CD4-positive, alpha-beta T cell (primary cell): ENCODE measurements at regions of chr20 and their contacts with region 1.

Region 1: GRCh38 chr20:63537525-63538203 is 488 bp upstream of the PTK6 start:
- DNase-seq: peak; percentile 83 to 97 (median 88)
- ATAC-seq: peak; percentile 86
- H3K4me3 ChIP-seq: peak overlapping the region; percentile 59
- H3K4me3 Mint-ChIP-seq: peak overlapping the region; percentile 80
- H3K27ac ChIP-seq: peak overlapping the region; percentile 59 to 73
- H3K27ac Mint-ChIP-seq: peak overlapping the region; percentile 78
- H3K4me1 ChIP-seq: peaks cover 37% of the 10 kb centered on the region
- H3K4me1 Mint-ChIP-seq: peaks cover 16% of the 10 kb centered on the region
- H3K27me3 ChIP-seq: no peaks in the 10 kb centered on the region
- H3K27me3 Mint-ChIP-seq: no peaks in the 10 kb centered on the region
- CTCF ChIP-seq: peak; percentile 97

Region 2: DNA sequence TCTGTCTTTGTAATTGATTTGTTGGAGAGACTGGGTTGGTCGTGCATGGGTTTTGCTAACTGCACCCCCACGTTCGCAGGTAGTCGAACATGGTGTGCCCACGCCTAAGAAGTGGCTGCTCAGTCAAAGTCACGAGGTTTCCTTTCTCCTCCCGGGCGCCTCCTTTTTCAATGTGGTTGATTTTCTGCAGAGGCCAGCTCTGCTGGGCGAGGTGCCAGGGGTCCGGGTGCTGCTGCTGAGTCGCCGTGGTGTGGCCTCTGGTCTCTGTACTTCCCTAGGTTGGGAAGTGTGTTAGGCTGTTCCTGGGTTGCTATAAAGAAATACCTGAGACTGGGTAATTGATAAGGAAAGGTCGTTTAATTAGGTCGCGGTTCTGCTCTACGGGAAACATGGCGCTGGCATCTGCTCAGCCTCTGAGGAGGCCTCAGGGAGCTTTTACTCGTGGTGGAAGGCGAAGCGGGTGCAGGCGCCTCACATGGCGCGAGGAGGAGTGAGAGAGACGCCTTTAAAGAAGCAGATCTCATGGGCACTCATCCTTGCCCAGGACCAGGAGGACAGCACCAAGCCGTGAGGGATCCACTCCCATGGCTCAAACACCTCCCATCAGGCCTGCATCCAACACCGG is 1285.2 kb before region 1 on chr20:
- CTCF ChIA-PET with region 1: no interaction called
- POLR2A ChIA-PET with region 1: no interaction called
- intact Hi-C with region 1: no loop called
- DNase-seq: no peak
- ATAC-seq: no peak
- H3K4me3 ChIP-seq: no peak overlapping the region
- H3K4me3 Mint-ChIP-seq: no peak overlapping the region
- H3K27ac ChIP-seq: no peak overlapping the region
- H3K27ac Mint-ChIP-seq: no peak overlapping the region
- H3K4me1 ChIP-seq: peaks cover 11% of the 10 kb centered on the region
- H3K4me1 Mint-ChIP-seq: peaks cover 18% of the 10 kb centered on the region
- H3K27me3 ChIP-seq: no peaks in the 10 kb centered on the region
- H3K27me3 Mint-ChIP-seq: no peaks in the 10 kb centered on the region
- CTCF ChIP-seq: no peak

Region 3: DNA sequence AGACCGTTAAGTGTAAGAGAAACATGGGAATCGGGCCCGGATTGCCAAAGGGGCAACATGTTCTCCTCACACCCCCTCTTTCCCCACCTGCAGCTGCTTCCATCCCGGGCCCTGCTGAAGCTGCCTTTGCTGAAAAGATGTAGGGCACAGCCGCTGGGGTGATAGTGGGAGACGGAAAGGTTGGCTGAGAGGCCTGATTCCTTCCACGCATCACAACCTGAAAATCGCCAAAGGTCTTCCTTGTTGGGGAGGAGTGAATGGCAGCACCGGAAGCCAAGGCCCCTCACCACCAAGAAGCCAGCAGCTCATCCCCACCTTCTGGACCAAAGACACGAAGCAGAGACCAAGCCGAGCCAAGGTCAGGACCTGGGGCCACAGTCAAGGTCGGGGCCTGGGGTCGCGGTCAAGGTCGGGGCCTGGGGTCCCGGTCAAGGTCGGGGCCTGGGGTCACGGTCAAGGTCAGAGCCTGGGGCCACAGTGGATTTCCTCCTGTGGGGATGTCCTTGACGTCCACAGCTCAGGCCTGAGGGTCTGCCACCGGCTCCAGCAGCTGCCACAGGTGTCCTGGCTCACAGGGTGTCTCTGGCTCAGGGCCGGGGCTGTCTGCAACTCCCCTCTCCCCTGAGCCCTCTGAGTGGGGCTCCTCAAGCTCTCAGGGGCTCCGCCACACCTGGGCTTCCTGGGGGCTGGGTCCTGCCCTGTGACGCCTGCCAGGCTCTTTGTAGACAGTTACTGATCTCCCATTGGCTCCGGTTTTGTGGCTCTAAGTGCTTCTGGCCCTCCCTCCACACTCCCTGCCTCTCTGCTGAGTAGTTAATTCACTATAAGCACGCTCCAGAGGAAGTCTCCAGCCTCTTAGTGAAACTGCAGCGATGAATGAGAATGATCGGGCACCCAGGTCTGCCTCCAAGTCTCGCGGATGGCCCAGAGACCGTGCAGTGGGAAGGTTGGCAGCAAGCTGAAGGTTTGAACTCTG is 171.0 kb before region 1 on chr20:
- CTCF ChIA-PET with region 1: no interaction called
- POLR2A ChIA-PET with region 1: no interaction called
- intact Hi-C with region 1: no loop called
- DNase-seq: no peak
- ATAC-seq: no peak
- H3K4me3 ChIP-seq: no peak overlapping the region
- H3K4me3 Mint-ChIP-seq: no peak overlapping the region
- H3K27ac ChIP-seq: no peak overlapping the region
- H3K27ac Mint-ChIP-seq: no peak overlapping the region
- H3K4me1 ChIP-seq: no peaks in the 10 kb centered on the region
- H3K4me1 Mint-ChIP-seq: no peaks in the 10 kb centered on the region
- H3K27me3 ChIP-seq: peaks cover 21 to 22% of the 10 kb centered on the region in 2 experiments
- H3K27me3 Mint-ChIP-seq: peaks cover 18% of the 10 kb centered on the region
- CTCF ChIP-seq: no peak

Region 4: DNA sequence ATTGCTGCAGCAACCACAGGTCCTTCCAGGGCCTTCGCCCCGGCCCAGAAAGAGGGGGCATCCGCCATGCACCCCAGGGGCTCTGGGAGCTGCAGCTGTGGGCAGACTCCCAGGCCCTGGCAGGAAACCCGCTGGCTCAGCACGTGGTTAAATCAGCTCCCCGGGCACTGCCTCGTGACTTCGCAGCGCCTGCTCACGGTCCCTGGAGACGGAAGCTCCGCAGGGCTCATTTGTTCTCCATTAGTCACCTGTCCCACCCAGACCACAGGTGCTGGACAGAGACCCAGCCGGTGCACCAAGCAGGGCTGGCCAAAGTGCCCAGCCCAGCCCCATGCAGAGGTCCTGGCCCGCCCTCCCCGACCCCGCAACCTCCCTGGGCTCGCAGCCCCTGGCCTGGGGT is 79.9 kb before region 1 on chr20:
- CTCF ChIA-PET with region 1: no interaction called
- POLR2A ChIA-PET with region 1: no interaction called
- intact Hi-C with region 1: no loop called
- DNase-seq: peak in 1 of 14 experiments; percentile 11
- ATAC-seq: no peak
- H3K4me3 ChIP-seq: no peak overlapping the region
- H3K4me3 Mint-ChIP-seq: no peak overlapping the region
- H3K27ac ChIP-seq: no peak overlapping the region
- H3K27ac Mint-ChIP-seq: no peak overlapping the region
- H3K4me1 ChIP-seq: peaks cover 23% of the 10 kb centered on the region
- H3K4me1 Mint-ChIP-seq: no peaks in the 10 kb centered on the region
- H3K27me3 ChIP-seq: peaks cover 23 to 27% of the 10 kb centered on the region in 2 experiments
- H3K27me3 Mint-ChIP-seq: peaks cover 21% of the 10 kb centered on the region
- CTCF ChIP-seq: no peak

Region 5: GRCh38 chr20:63508072-63508768 is 29.4 kb before region 1 on chr20:
- CTCF ChIA-PET with region 1: no interaction called
- POLR2A ChIA-PET with region 1: no interaction called
- intact Hi-C with region 1: no loop called
- DNase-seq: peak in 1 of 14 experiments; percentile 58
- ATAC-seq: no peak
- H3K4me3 ChIP-seq: no peak overlapping the region
- H3K4me3 Mint-ChIP-seq: no peak overlapping the region
- H3K27ac ChIP-seq: no peak overlapping the region
- H3K27ac Mint-ChIP-seq: no peak overlapping the region
- H3K4me1 ChIP-seq: peaks cover 6% of the 10 kb centered on the region
- H3K4me1 Mint-ChIP-seq: no peaks in the 10 kb centered on the region
- H3K27me3 ChIP-seq: peaks cover 0 to 22% of the 10 kb centered on the region in 2 experiments
- H3K27me3 Mint-ChIP-seq: peaks cover 58% of the 10 kb centered on the region
- CTCF ChIP-seq: no peak

Region 6: DNA sequence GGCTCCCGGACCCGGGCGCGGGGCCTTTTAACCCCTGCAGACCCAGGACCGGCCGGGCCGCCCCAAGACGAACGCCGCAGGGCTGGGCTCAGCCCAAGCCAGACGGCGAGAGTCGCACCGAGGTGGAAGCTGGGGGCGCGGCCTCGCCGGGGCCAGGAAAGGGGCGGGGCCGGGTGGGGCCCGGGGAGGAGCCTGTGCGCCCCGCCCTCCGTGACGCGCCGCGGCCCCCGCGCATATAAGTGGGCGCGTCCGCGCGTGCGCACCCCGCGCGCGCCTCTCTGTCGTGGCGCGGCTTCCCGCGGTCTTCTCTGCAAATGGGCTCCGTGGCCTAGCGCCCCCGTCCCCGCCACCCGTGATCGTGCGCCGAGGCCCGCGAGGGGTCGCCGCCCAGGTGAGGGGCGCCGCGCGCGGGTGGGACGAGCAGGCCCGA is 17.1 kb before region 1 on chr20 and contains the start of gene PPDPF:
- CTCF ChIA-PET with region 1: interaction called, 18 read pairs
- POLR2A ChIA-PET with region 1: interaction called, 71 read pairs
- intact Hi-C with region 1: loop called in 1 of 2 experiments (anchors 2 kb)
- DNase-seq: peak; percentile 75 to 95 (median 84)
- ATAC-seq: peak; percentile 80
- H3K4me3 ChIP-seq: peak within 1 kb of the TSS; percentile 65
- H3K4me3 Mint-ChIP-seq: peak within 1 kb of the TSS; percentile 88
- H3K27ac ChIP-seq: peak within 1 kb of the TSS in 1 of 2 donors; percentile 35
- H3K27ac Mint-ChIP-seq: peak within 1 kb of the TSS; percentile 69
- H3K4me1 ChIP-seq: peaks cover 29% of the 10 kb centered on the region
- H3K4me1 Mint-ChIP-seq: peaks cover 13% of the 10 kb centered on the region
- H3K27me3 ChIP-seq: no peaks in the 10 kb centered on the region
- H3K27me3 Mint-ChIP-seq: no peaks in the 10 kb centered on the region
- CTCF ChIP-seq: no peak
- total RNA-seq, gene PPDPF: 249 to 251 TPM

Region 7: GRCh38 chr20:63627129-63627750 is 89.6 kb after region 1 on chr20:
- CTCF ChIA-PET with region 1: interaction called, 6 read pairs
- POLR2A ChIA-PET with region 1: interaction called, 17 read pairs
- intact Hi-C with region 1: no loop called
- DNase-seq: peak in 13 of 14 experiments; percentile 88 to 97 (median 95)
- ATAC-seq: peak; percentile 77
- H3K4me3 ChIP-seq: peak overlapping the region; percentile 95
- H3K4me3 Mint-ChIP-seq: peak overlapping the region; percentile 98
- H3K27ac ChIP-seq: peak overlapping the region; percentile 81 to 89
- H3K27ac Mint-ChIP-seq: peak overlapping the region; percentile 90
- H3K4me1 ChIP-seq: peaks cover 52% of the 10 kb centered on the region
- H3K4me1 Mint-ChIP-seq: peaks cover 38% of the 10 kb centered on the region
- H3K27me3 ChIP-seq: no peaks in the 10 kb centered on the region
- H3K27me3 Mint-ChIP-seq: no peaks in the 10 kb centered on the region
- CTCF ChIP-seq: no peak

Region 8: GRCh38 chr20:63657937-63658748 is 120.5 kb after region 1 on chr20 and contains the start of gene RTEL1:
- CTCF ChIA-PET with region 1: interaction called, 6 read pairs
- POLR2A ChIA-PET with region 1: interaction called, 14 read pairs
- intact Hi-C with region 1: loop called in 1 of 2 experiments (anchors 1 kb)
- DNase-seq: peak; percentile 77 to 93 (median 86)
- ATAC-seq: peak; percentile 83
- H3K4me3 ChIP-seq: peak within 1 kb of the TSS; percentile 76
- H3K4me3 Mint-ChIP-seq: peak within 1 kb of the TSS; percentile 98
- H3K27ac ChIP-seq: peak within 1 kb of the TSS; percentile 56 to 87
- H3K27ac Mint-ChIP-seq: peak within 1 kb of the TSS; percentile 96
- H3K4me1 ChIP-seq: peaks cover 47% of the 10 kb centered on the region
- H3K4me1 Mint-ChIP-seq: peaks cover 38% of the 10 kb centered on the region
- H3K27me3 ChIP-seq: no peaks in the 10 kb centered on the region
- H3K27me3 Mint-ChIP-seq: no peaks in the 10 kb centered on the region
- CTCF ChIP-seq: no peak
- total RNA-seq, gene RTEL1: 25.5 to 27.6 TPM

Region 9: DNA sequence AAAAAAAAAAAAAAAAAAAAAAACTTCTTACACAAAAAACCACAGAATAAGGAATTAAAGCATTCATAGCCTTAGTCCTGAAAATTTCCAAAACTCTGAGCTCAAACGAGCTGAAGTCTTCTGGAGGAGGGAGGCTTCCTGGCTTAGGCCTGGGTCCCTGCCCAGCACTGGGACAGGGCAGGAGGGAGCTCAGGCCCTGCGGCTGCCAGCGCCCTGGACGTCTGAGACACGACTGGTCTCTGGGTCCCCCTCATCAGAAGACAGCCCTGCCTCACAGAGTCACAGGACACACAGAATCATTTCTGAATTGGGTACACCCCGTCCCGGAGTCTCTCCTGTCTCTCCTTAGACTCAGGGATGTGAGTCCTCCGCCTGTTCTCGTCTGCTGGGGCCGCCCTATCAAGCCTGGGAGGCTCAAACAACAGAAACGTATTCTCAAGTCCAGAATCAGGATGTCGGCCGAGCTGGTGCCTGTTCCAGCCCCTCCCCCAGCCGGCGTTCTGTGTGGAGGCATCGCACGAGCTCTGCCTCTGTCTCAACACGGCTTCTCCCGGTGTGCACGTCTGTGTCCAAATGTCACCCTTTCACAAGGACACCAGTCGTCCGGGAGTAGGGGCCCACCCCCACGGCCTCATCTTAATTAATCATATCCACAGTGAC is 254.0 kb after region 1 on chr20:
- CTCF ChIA-PET with region 1: interaction called, 9 read pairs
- POLR2A ChIA-PET with region 1: no interaction called
- intact Hi-C with region 1: loop called (anchors 1 to 2 kb)
- DNase-seq: no peak
- ATAC-seq: no peak
- H3K4me3 ChIP-seq: no peak overlapping the region
- H3K4me3 Mint-ChIP-seq: no peak overlapping the region
- H3K27ac ChIP-seq: no peak overlapping the region
- H3K27ac Mint-ChIP-seq: no peak overlapping the region
- H3K4me1 ChIP-seq: peaks cover 5% of the 10 kb centered on the region
- H3K4me1 Mint-ChIP-seq: no peaks in the 10 kb centered on the region
- H3K27me3 ChIP-seq: no peaks in the 10 kb centered on the region
- H3K27me3 Mint-ChIP-seq: peaks cover 3% of the 10 kb centered on the region
- CTCF ChIP-seq: no peak

Region 10: DNA sequence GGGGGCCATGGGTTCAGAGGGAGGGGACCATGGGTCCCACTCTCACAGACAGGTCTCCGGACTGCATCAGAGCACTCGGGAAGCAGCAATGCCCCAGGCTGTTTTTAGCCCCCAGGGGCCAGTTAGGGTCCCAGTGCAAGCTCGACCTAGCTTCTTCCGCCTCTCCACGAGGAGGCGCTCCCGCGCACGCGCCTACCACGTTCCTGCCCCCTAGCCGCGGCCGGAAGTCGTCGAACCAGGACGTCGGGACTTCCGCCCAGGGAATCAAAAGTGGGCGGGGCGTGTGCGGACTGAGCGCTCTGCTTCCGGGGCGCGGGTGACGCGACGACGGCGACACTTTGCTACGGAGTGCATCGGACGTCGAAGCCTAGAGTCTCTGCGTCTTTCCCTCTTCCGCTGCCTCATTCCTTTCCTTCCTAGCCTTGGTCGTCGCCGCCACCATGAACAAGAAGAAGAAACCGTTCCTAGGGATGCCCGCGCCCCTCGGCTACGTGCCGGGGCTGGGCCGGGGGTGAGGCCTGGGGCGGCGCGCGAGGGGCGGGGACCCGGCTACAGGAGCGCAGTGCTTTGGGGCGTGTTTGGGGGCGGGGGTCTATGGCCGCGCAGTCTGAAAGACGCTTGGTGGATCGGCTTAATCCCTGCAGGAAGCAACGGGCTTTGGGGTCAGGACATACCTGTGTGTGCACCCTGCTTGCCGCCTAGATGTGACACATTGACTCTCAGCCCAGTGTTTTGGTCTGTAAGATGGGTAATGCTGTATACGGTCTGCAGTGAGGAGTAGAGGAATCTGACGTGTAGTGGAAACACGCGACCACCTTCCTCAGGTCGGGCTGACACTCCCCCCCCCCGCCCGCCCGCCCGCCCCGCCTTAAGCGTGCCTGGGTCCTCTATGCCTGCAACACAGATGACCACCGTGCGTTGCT is 443.4 kb after region 1 on chr20 and contains the start of gene PRPF6:
- CTCF ChIA-PET with region 1: interaction called, 5 read pairs
- POLR2A ChIA-PET with region 1: no interaction called
- intact Hi-C with region 1: loop called in 1 of 2 experiments (anchors 5 kb)
- DNase-seq: peak; percentile 89 to 98 (median 94)
- ATAC-seq: peak; percentile 58
- H3K4me3 ChIP-seq: peak within 1 kb of the TSS; percentile 69
- H3K4me3 Mint-ChIP-seq: peak within 1 kb of the TSS; percentile 90
- H3K27ac ChIP-seq: peak within 1 kb of the TSS; percentile 85 to 87
- H3K27ac Mint-ChIP-seq: peak within 1 kb of the TSS; percentile 98
- H3K4me1 ChIP-seq: peaks cover 60% of the 10 kb centered on the region
- H3K4me1 Mint-ChIP-seq: peaks cover 67% of the 10 kb centered on the region
- H3K27me3 ChIP-seq: no peaks in the 10 kb centered on the region
- H3K27me3 Mint-ChIP-seq: no peaks in the 10 kb centered on the region
- CTCF ChIP-seq: peak; percentile 93
- total RNA-seq, gene PRPF6: 50.6 to 51.3 TPM